Naive thymus-derived CD4-positive, alpha-beta T cell (primary cell): ENCODE measurements at regions of chr12 and their contacts with region 1.

Region 1: DNA sequence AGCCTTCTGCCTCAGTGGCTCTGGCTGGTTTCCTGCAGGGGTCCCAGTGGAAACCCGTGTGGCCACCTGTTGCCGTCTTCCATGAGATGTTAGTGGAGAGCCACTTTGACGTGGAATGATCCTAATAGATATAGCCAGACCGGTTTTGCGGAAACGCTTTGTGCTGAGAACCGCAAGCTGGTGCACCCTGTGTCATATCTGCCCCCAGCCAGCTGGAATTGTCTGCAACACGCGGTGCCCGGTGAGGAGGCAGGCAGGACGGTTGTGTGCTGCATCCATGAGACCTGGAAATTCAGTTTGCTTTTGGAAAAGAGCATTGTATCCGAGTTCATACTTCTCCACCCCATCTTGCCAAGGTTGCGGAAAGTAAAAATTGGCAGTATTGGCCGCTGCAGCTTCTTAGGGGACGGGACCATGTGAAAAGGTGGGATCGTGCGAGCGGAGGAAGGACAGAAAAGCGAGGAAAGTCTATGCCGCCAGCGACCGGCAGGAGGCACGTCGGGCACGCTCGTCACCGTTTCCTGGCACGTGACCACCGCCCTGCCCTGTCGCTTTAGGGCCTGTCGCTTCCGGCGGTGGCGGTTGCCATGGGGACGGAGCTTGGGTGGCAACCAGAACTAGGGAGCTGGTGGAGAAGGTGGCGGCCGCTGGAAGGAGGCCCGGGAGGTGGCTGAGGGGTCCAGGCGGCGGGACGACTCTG is at the start of gene CFAP251:
- DNase-seq: peak; percentile 88 to 98 (median 94)
- ATAC-seq: peak; percentile 99
- H3K4me3 ChIP-seq: peak within 1 kb of the TSS; percentile 58
- H3K4me3 Mint-ChIP-seq: peak within 1 kb of the TSS; percentile 68 to 94 (median 86)
- H3K27ac ChIP-seq: peak within 1 kb of the TSS; percentile 71
- H3K27ac Mint-ChIP-seq: peak within 1 kb of the TSS; percentile 91 to 98 (median 93)
- H3K4me1 ChIP-seq: peaks cover 4 to 10% of the 10 kb centered on the region in 2 donors
- H3K4me1 Mint-ChIP-seq: peaks cover 8 to 19% (median 13%) of the 10 kb centered on the region in 7 donors
- H3K27me3 ChIP-seq: no peaks in the 10 kb centered on the region
- H3K27me3 Mint-ChIP-seq: no peaks in the 10 kb centered on the region
- total RNA-seq, gene CFAP251: 0.38 to 1.5 (median 0.88) TPM

Region 2: GRCh38 chr12:121712461-121713256 is 205.5 kb before region 1 on chr12 and contains the start of gene TMEM120B:
- CTCF ChIA-PET with region 1: no interaction called
- POLR2A ChIA-PET with region 1: interaction called, 3 read pairs
- intact Hi-C with region 1: loop called in 1 of 2 experiments (anchors 1 kb)
- DNase-seq: peak; percentile 75 to 91 (median 86)
- ATAC-seq: peak; percentile 97
- H3K4me3 ChIP-seq: peak within 1 kb of the TSS; percentile 99
- H3K4me3 Mint-ChIP-seq: peak within 1 kb of the TSS; percentile 84 to 97 (median 94)
- H3K27ac ChIP-seq: peak within 1 kb of the TSS; percentile 82
- H3K27ac Mint-ChIP-seq: peak within 1 kb of the TSS; percentile 86 to 96 (median 92)
- H3K4me1 ChIP-seq: peaks cover 11 to 12% of the 10 kb centered on the region in 2 donors
- H3K4me1 Mint-ChIP-seq: peaks cover 7 to 37% (median 26%) of the 10 kb centered on the region in 7 donors
- H3K27me3 ChIP-seq: no peaks in the 10 kb centered on the region
- H3K27me3 Mint-ChIP-seq: no peaks in the 10 kb centered on the region
- total RNA-seq, gene TMEM120B: 7.3 to 14.3 (median 9.2) TPM

Region 3: DNA sequence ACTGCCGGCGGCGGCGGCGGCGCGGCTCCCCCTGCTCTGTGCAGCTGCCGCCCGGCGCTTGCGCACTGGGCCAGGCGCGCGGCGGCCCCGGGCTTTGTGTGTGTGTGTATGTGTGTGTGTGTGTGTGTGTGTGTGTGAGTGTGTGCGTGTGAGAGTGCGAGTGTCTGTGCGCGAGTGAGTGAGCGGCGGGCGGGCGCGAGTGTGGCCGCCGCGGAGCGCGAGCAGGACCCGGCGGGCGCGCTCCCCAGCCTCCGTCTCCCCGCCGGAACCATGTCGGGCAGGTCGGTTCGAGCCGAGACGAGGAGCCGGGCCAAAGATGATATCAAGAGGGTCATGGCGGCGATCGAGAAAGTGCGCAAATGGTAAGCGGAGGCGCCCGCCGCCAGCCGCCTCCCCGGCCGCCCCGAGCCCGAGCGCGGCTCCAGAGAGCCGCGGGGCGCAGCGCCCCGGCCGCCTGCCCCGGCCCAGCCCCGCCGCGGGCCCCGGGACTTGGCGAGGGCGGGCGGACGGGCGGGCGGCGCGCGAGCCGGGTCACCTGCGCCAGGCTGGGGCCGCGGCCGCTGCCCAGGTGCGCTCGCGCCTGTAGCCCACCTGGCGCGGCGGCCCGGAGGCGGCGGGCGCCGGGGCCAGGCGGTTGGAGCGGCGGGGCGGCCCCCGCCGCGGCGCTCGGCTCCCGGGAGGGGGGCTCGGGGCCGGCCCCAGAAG is 103.8 kb after region 1 on chr12 and contains the start of gene BCL7A:
- CTCF ChIA-PET with region 1: interaction called, 3 read pairs
- POLR2A ChIA-PET with region 1: no interaction called
- intact Hi-C with region 1: loop called (anchors 2 to 5 kb)
- DNase-seq: peak; percentile 28 to 70 (median 64)
- ATAC-seq: peak; percentile 86
- H3K4me3 ChIP-seq: peak within 1 kb of the TSS; percentile 57
- H3K4me3 Mint-ChIP-seq: peak within 1 kb of the TSS; percentile 86 to 96 (median 92)
- H3K27ac ChIP-seq: peak within 1 kb of the TSS; percentile 43
- H3K27ac Mint-ChIP-seq: peak within 1 kb of the TSS in 8 of 9 donors; percentile 76 to 96 (median 84)
- H3K4me1 ChIP-seq: peaks cover 0 to 18% of the 10 kb centered on the region in 2 donors
- H3K4me1 Mint-ChIP-seq: peaks cover 0 to 13% (median 10%) of the 10 kb centered on the region in 7 donors
- H3K27me3 ChIP-seq: no peaks in the 10 kb centered on the region
- H3K27me3 Mint-ChIP-seq: peaks cover 5 to 31% (median 6%) of the 10 kb centered on the region in 5 donors
- total RNA-seq, gene BCL7A: 4.1 to 6.6 (median 5.4) TPM

Region 4: GRCh38 chr12:122190842-122191668 is 272.9 kb after region 1 on chr12:
- CTCF ChIA-PET with region 1: no interaction called
- POLR2A ChIA-PET with region 1: no interaction called
- intact Hi-C with region 1: loop called in 1 of 2 experiments (anchors 1 kb)
- DNase-seq: peak in 8 of 9 donors; percentile 29 to 70 (median 55)
- ATAC-seq: peak; percentile 89
- H3K4me3 ChIP-seq: no peak overlapping the region
- H3K4me3 Mint-ChIP-seq: no peak overlapping the region
- H3K27ac ChIP-seq: no peak overlapping the region
- H3K27ac Mint-ChIP-seq: no peak overlapping the region
- H3K4me1 ChIP-seq: no peaks in the 10 kb centered on the region
- H3K4me1 Mint-ChIP-seq: peaks cover 0 to 6% (median 0%) of the 10 kb centered on the region in 7 donors
- H3K27me3 ChIP-seq: no peaks in the 10 kb centered on the region
- H3K27me3 Mint-ChIP-seq: peaks cover 0 to 12% (median 0%) of the 10 kb centered on the region in 5 donors